ENCODE measurements at regions of chr9 and their contacts with region 1.

Region 1: GRCh38 chr9:18604767-18605730 is 131.1 kb downstream of the ADAMTSL1 start:
- DNase-seq: no peak
- H3K4me3 ChIP-seq: no peak overlapping the region
- H3K27ac ChIP-seq: no peak overlapping the region
- H3K4me1 ChIP-seq: peaks cover 10% of the 10 kb centered on the region
- H3K27me3 ChIP-seq: no peaks in the 10 kb centered on the region
- CTCF ChIP-seq: no peak
- EP300 ChIP-seq: no peak
- POLR2A ChIP-seq: no peak

Region 2: DNA sequence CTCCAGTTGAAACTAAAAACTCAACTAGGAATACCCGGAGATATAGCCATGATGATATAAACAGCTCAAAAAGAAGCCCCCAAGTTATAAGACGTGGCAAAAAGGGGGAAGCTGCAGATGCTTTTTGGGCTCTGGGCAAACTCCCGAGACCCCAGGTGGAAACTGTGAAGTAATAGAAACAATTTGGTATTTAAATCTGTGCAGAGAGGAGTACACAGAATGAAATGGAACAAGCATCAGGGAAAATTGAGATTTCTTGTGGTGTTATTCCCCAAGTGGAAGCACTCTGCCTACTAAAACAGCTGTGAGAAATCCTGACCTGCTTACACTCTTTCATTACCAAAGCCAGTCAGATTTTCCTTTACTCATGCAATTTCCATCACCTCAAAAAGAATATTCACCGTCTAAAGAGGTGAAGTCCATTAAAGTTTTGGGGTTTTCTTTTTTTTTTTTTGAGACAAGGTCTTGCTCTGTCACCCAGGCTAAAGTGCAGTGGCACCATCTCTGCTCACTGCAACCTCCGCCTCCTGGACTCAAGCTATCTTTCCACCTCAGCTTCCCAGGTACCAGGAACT is 404.4 kb after region 1 on chr9:
- intact Hi-C with region 1: loop called in 1 of 4 experiments (anchors 5 kb)
- DNase-seq: no peak
- H3K4me3 ChIP-seq: no peak overlapping the region
- H3K27ac ChIP-seq: no peak overlapping the region
- H3K4me1 ChIP-seq: no peaks in the 10 kb centered on the region
- H3K27me3 ChIP-seq: no peaks in the 10 kb centered on the region
- CTCF ChIP-seq: no peak
- EP300 ChIP-seq: no peak
- POLR2A ChIP-seq: no peak